ENCODE measurements at regions of chr12 and their contacts with region 1.

Region 1: DNA sequence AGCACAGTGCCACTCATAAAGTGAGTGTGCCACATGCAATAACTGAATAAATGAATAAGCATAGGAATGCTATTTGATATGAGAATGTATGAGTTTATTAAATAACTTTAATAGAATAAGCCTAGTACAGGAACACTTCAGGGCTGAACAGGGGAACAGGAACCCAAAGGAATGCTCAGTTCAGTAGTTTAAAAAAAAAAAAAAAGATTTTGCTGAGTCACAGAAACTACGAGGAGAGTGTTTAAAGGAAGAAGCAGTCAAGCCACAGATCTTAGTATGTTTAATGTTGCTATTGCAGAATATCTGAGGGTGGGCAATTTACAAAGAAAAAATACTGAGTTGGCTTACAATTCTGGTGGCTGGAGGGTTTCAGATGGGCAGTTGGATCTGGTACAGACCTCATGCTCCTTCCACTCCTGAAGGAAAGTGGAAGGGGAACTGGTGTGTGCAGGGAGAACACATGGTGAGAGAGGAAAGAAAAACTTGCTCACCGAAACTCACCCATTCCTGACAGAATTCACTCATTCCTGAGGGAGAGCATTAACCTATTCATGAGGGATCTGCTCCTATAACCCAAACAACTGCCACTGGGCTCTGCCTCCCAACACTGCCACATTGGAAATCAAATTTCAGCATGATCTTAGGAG is 880.3 kb upstream of the MGAT4C start:
- DNase-seq: no peak
- ATAC-seq: no peak
- H3K4me3 ChIP-seq: no peak overlapping the region
- H3K27ac ChIP-seq: no peak overlapping the region
- H3K4me1 ChIP-seq: no peaks in the 10 kb centered on the region
- H3K27me3 ChIP-seq: no peaks in the 10 kb centered on the region

Region 2: GRCh38 chr12:87311206-87311605 is 174.8 kb after region 1 on chr12:
- intact Hi-C with region 1: loop called in 1 of 2 experiments (anchors 10 kb)
- DNase-seq: no peak
- ATAC-seq: no peak
- H3K4me3 ChIP-seq: no peak overlapping the region
- H3K27ac ChIP-seq: no peak overlapping the region
- H3K4me1 ChIP-seq: peaks cover 2 to 3% of the 10 kb centered on the region in 2 donors
- H3K27me3 ChIP-seq: no peaks in the 10 kb centered on the region